ENCODE measurements at regions of chr11 and their contacts with region 1.

Region 1: DNA sequence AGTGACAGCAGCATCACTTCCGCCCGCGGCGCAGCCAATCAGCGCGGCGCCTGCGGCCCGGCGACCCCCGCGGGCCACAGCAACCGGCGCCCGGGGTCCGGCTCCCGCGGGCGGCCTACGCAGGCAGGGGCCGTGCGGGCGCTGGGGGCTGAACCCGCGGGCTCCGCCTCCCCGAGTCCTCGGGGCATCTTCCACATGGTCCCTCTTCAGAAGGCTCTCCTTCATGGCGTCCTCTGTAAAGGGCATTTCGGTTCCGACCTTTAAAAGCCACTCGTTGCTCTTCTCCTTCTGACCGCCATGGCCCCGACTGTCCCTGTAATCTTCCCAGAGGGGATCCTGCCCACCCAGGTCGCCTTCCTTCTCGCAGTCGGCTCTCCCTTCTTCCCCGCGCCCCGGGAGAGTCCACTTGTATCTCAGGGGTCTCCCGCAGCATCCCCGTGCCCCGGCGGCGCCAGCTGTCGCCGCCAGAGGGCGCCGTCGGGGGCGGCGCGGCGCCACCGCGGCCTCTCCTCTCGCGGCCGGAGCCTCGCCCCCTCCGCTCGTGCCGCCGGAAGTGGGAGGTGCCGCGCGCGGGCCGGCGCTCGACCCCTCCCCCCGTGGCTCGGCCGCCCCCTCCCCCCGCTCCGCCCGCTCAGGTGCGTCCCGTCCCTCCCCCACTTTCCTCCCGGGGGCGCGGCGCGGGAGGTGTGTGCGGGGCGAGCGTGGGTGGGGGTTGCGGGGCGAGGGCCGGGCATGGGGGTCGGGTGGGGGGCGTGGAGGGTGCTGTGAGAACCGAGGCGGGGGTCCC is at the start of gene RNF214:
- DNase-seq: peak; percentile 73
- H3K4me3 Mint-ChIP-seq: peak within 1 kb of the TSS; percentile 99
- H3K27ac Mint-ChIP-seq: peak within 1 kb of the TSS; percentile 100
- H3K4me1 Mint-ChIP-seq: peaks cover 44% of the 10 kb centered on the region
- H3K27me3 Mint-ChIP-seq: no peaks in the 10 kb centered on the region
- total RNA-seq, gene RNF214: 18.5 and 26.3 TPM in 2 replicates

Region 2: DNA sequence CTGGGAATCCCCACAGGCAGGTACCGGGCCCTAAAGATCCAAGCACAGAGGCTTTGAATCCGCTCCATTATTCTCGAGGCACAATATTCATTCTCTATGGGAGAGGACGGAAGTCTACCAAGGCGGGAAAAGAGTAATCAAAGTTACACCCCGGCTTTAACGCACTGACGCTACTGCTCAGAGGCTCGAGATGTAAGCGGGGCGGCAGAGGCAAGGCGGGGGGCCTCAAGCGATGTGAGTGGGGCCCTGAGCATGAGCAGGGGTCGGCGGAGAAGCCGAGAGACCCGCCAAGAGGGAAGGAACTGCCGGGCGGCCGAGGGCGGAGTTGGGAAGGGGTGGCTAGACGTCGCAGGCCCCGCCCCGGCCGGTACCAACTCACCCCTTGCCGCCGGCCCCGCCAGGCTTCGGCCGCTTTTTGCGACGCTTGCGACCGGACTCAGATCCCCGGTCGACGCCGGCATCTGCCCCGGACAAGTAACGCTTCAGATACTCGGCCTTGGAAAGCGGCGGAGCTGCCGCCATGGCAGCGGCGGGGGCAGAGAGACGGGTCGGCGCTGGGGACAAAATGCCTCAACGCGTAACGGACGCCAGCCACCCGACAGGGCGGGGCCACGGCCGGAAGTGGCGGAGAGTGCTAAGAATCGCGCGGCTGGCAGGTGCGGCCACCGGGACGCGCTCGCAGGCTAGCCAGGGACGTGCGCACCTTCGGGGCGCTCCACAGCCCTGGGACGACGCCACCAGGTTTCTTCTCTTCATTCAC is 459.7 kb before region 1 on chr11 and contains the start of gene BUD13:
- intact Hi-C with region 1: loop called (anchors 1 kb)
- DNase-seq: peak; percentile 93
- H3K4me3 Mint-ChIP-seq: peak within 1 kb of the TSS; percentile 99
- H3K27ac Mint-ChIP-seq: peak within 1 kb of the TSS; percentile 97
- H3K4me1 Mint-ChIP-seq: peaks cover 46% of the 10 kb centered on the region
- H3K27me3 Mint-ChIP-seq: no peaks in the 10 kb centered on the region
- total RNA-seq, gene BUD13: 30.0 and 33.4 TPM in 2 replicates

Region 3: DNA sequence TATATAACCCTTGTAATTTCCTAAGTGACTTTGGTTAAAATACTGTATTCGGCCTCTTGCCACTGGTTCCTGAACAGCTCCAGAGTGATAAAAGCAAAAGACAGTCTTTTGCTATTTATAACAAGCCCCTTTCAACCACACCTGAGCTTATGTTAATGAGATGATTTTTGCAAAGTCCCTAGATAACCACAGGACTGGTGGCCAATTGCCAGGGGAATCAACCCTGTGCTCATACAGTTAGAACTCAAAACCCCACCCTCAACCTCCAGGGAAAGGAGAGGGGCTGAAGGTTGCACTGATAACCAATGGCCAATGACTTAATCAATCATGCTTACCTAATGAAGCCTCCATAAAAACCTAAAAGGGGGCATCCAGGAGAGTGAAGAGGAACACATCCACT is 212.0 kb before region 1 on chr11:
- intact Hi-C with region 1: loop called (anchors 5 kb)
- DNase-seq: no peak
- H3K4me3 Mint-ChIP-seq: no peak overlapping the region
- H3K27ac Mint-ChIP-seq: peak overlapping the region; percentile 40
- H3K4me1 Mint-ChIP-seq: peaks cover 58% of the 10 kb centered on the region
- H3K27me3 Mint-ChIP-seq: no peaks in the 10 kb centered on the region

Region 4: DNA sequence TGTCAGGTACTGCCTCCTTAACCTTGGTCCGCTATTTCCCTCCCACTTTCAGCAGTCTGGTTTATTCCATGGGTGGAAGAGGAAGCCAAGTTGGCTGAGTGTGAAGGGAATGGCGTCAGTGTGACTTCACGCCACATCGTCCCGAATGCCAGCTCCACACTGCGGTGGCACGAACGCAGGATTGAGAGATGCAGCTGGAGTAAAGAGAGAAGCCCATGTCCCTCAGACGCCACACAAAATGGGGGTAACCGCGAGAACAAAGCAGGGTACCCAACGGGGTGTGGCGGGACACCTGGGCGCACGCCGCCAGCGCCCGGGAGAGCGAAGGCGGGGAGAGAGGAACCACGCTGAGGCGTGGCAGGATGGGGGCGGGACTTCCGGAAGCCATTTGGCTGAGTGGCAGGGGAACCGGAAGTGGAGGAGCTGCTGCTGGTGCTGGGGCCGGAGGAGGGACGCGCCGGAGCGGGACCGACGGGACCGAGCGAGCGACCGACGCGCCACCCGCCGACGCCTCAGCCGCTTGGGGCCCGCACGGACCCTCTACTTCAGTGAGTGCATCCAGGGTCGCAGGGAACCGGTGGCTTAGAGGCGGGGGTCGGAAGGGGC is 88.3 kb before region 1 on chr11 and contains the start of gene PAFAH1B2:
- intact Hi-C with region 1: loop called (anchors 1 kb)
- DNase-seq: peak; percentile 93
- H3K4me3 Mint-ChIP-seq: peak within 1 kb of the TSS; percentile 97
- H3K27ac Mint-ChIP-seq: peak within 1 kb of the TSS; percentile 90
- H3K4me1 Mint-ChIP-seq: peaks cover 29% of the 10 kb centered on the region
- H3K27me3 Mint-ChIP-seq: peaks cover 8% of the 10 kb centered on the region
- total RNA-seq, gene PAFAH1B2: 71.8 and 83.6 TPM in 2 replicates

Region 5: GRCh38 chr11:117327567-117328374 is 95.5 kb after region 1 on chr11 and contains the start of gene CEP164:
- intact Hi-C with region 1: loop called (anchors 1 kb)
- DNase-seq: peak; percentile 93
- H3K4me3 Mint-ChIP-seq: peak within 1 kb of the TSS; percentile 75
- H3K27ac Mint-ChIP-seq: peak within 1 kb of the TSS; percentile 45
- H3K4me1 Mint-ChIP-seq: peaks cover 9% of the 10 kb centered on the region
- H3K27me3 Mint-ChIP-seq: peaks cover 9% of the 10 kb centered on the region
- total RNA-seq, gene CEP164: 37.2 and 43.5 TPM in 2 replicates

Region 6: DNA sequence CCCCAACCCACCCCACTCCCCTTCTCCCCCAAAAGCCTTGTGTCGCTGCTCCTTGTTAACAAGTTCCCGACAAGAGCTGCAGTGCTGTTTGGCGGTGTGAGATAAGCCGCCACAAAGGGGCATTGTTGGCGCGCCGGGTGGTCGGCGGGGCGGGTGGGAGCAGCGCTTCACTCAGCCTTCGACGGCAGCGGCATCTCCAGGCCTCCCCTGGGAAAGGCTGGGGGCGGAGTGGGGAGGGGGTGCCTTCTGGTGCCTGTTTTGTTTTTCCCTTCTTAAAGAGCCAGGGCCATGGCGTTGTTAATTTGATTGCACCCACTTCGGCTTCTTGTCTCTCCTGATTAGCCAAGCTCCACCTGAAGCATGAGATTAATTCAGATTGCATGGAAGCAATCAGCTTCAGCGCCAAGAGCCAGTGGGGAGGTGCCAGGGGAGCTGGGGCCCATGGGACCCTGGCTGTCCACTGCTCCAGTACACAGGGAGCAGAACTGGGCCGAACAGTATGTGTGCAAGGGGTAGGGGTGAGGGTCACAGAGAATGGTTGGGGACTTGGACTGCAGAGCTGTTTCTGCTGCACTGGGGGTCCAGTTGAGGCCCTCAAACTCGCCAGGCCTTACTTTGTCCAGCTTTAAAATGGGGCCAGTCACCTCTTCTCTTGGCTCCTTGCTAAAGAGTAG is 260.4 kb after region 1 on chr11:
- intact Hi-C with region 1: no loop called
- DNase-seq: no peak
- H3K4me3 Mint-ChIP-seq: no peak overlapping the region
- H3K27ac Mint-ChIP-seq: no peak overlapping the region
- H3K4me1 Mint-ChIP-seq: no peaks in the 10 kb centered on the region
- H3K27me3 Mint-ChIP-seq: peaks cover 8% of the 10 kb centered on the region

Region 7: DNA sequence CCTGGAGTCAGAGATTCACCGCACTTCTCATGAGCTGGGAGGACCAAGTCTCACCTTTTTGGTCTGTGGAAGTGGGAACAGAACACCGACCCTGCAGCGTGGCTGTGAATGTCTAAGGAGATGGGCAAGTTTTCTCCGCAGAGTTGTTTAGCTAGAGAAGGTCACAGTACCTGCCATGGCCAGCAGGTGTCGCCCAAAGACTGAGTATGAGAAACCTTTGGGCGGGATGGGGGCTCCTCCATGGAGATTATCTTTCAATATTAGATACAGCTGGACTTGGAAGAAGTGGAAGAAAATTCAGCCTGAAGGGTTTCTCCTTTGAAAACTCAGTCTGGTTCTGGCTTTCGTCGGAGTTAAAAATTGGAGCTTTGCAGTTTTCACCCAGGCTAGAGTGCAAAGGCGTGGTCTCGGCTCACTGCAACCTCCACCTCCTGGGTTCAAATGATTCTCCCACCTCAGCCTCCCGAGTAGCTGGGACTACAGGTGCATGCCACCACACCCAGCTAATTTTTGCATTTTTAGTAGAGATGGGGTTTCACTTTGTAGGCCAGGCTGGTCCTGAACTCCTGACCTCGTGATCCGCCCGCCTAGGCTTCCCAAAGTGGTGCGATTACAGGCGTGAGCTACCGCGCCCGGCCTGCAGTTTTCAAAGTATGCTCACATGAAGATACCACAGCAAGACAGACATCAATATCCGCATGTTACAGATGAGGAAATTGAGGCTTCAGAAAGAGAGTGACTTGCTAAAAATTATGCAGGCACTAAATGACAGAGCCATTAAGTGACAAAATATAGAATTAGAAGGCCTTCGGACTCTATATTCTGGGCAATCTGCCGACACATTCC is 575.4 kb after region 1 on chr11:
- intact Hi-C with region 1: no loop called
- DNase-seq: peak; percentile 53
- H3K4me3 Mint-ChIP-seq: no peak overlapping the region
- H3K27ac Mint-ChIP-seq: peak overlapping the region; percentile 30
- H3K4me1 Mint-ChIP-seq: peaks cover 33% of the 10 kb centered on the region
- H3K27me3 Mint-ChIP-seq: peaks cover 5% of the 10 kb centered on the region

Region 8: GRCh38 chr11:118401151-118401878 is 1169.0 kb after region 1 on chr11 and contains the start of gene ATP5MG:
- intact Hi-C with region 1: loop called (anchors 5 kb)
- DNase-seq: peak; percentile 87
- H3K4me3 Mint-ChIP-seq: peak within 1 kb of the TSS; percentile 93
- H3K27ac Mint-ChIP-seq: peak within 1 kb of the TSS; percentile 96
- H3K4me1 Mint-ChIP-seq: peaks cover 68% of the 10 kb centered on the region
- H3K27me3 Mint-ChIP-seq: no peaks in the 10 kb centered on the region
- total RNA-seq, gene ATP5MG: 205 and 216 TPM in 2 replicates